OCI-LY7 (cell line): ENCODE measurements at regions of chr18 and their contacts with region 1.

Region 1: GRCh38 chr18:26090130-26091046 is at the start of gene SS18:
- DNase-seq: peak; percentile 98
- H3K4me3 ChIP-seq: peak within 1 kb of the TSS; percentile 97
- H3K27ac ChIP-seq: peak within 1 kb of the TSS; percentile 90
- H3K4me1 ChIP-seq: peaks cover 44% of the 10 kb centered on the region
- CTCF ChIP-seq: peak; percentile 26; the same call in 1 of the 2 replicates
- total RNA-seq, gene SS18: 116 and 155 TPM in 2 replicates

Region 2: GRCh38 chr18:25827961-25828561 is 262.3 kb before region 1 on chr18:
- CTCF ChIA-PET with region 1: no interaction called
- POLR2A ChIA-PET with region 1: no interaction called
- intact Hi-C with region 1: no loop called
- DNase-seq: no peak
- H3K4me3 ChIP-seq: no peak overlapping the region
- H3K27ac ChIP-seq: no peak overlapping the region
- H3K4me1 ChIP-seq: no peaks in the 10 kb centered on the region
- CTCF ChIP-seq: no peak

Region 3: GRCh38 chr18:26164571-26164970 is 74.2 kb after region 1 on chr18:
- CTCF ChIA-PET with region 1: interaction called, 3 read pairs
- POLR2A ChIA-PET with region 1: interaction called, 4 read pairs
- intact Hi-C with region 1: loop called (anchors 2 kb)
- DNase-seq: no peak
- H3K4me3 ChIP-seq: no peak overlapping the region
- H3K27ac ChIP-seq: no peak overlapping the region
- H3K4me1 ChIP-seq: peaks cover 45% of the 10 kb centered on the region
- CTCF ChIP-seq: no peak

Region 4: DNA sequence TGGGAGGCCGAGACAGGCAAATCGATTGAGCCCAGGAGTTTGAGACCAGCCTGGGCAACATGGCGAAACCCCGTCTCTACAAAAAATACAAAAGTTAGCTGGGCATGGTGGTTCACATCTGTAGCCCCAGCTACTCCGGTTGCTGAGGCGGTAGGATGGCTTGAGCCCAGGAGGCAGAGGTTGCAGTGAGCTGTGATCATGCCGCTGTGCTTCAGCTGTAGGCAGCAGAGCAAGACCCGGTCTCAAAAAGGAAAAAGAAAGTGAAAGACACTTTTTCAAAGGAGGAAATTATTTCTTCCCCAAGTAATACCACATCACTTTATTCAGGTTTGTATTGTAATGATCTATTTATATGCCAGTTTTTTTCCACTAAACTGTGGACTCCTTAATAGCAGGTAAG is 100.1 kb after region 1 on chr18:
- CTCF ChIA-PET with region 1: no interaction called
- POLR2A ChIA-PET with region 1: interaction called, 5 read pairs
- intact Hi-C with region 1: loop called (anchors 1 kb)
- DNase-seq: peak; percentile 94
- H3K4me3 ChIP-seq: peak overlapping the region; percentile 56
- H3K27ac ChIP-seq: peak overlapping the region; percentile 99
- H3K4me1 ChIP-seq: peaks cover 55% of the 10 kb centered on the region
- CTCF ChIP-seq: no peak

Region 5: DNA sequence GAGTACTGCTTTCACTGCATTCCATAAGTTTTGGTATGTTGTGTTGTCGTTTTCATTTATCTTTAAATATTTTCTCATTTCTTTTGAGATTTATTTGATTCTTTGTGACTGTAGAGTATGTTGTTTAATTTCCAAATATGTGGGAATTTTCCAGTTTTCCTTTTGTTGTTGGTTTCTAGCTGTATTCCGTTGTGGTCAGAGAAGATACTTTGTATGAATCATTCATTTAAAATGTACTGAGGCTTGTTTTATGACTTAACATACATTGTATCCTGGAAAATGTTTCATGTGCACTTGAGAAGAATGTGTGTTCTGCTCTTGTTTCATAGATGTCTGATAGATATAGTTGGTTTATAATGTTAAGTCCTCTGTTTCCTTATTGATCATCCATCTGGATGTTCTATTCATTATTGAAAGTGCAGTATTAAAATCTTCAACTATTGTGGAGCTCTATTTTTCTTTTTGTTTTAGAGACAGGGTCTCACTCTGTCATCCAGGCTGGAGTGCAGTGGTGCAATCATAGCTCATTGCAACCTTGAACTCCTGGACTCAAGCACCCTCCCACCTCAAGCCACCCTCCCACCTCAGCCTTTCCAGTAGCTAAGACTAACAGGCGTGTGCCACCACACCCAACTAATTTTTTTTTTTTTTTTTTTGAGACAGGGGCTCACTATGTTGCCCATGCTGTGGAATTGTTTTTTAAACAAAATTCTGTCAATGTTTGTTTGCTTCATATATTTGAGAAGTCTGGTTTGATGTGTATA is 232.7 kb after region 1 on chr18:
- CTCF ChIA-PET with region 1: no interaction called
- POLR2A ChIA-PET with region 1: no interaction called
- intact Hi-C with region 1: no loop called
- DNase-seq: no peak
- H3K4me3 ChIP-seq: no peak overlapping the region
- H3K27ac ChIP-seq: no peak overlapping the region
- H3K4me1 ChIP-seq: no peaks in the 10 kb centered on the region
- CTCF ChIP-seq: no peak